ENCODE measurements at regions of chr3 and their contacts with region 1.

Region 1: GRCh38 chr3:191051037-191051436 is 148.0 kb upstream of the OSTN start:
- DNase-seq: no peak
- ATAC-seq: no peak

Region 2: GRCh38 chr3:190701096-190701532 is 349.9 kb before region 1 on chr3:
- intact Hi-C with region 1: loop called in 1 of 2 experiments (anchors 5 kb)
- DNase-seq: peak; percentile 27 to 28
- ATAC-seq: peak; percentile 100

Region 3: GRCh38 chr3:190883973-190884832 is 166.8 kb before region 1 on chr3:
- intact Hi-C with region 1: loop called in 1 of 2 experiments (anchors 10 kb)
- DNase-seq: peak in 1 of 2 donors; percentile 17
- ATAC-seq: no peak

Region 4: GRCh38 chr3:191435981-191436380 is 384.9 kb after region 1 on chr3:
- intact Hi-C with region 1: no loop called
- DNase-seq: no peak
- ATAC-seq: no peak

Measured in left colon (tissue), 2 donors.